Endothelial cell of umbilical vein (primary cell): ENCODE measurements at regions of chr3 and their contacts with region 1.

Region 1: DNA sequence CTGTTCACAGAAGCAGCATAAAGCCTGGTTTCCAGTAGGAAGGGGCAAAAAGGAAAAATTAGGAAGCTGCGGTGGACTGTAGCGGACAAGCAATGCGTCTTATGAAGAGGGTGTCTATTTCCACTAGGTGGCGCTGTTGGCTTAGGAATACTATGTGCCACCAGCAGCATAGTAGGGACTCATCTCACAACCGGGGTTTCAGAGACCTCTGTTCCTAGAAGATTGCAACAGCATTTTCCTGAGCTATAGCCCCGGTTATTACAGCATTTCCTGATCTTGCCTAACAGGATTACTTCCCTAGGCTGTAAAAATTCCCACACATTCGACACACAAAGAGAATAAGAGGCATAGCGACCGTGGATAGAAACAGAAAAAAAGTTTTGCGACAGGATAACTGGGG is 683.0 kb downstream of the TBL1XR1 start:
- DNase-seq: peak; percentile 73
- H3K4me3 ChIP-seq: no peak overlapping the region
- H3K27ac ChIP-seq: no peak overlapping the region
- H3K4me1 ChIP-seq: no peaks in the 10 kb centered on the region
- H3K27me3 ChIP-seq: no peaks in the 10 kb centered on the region
- CTCF ChIP-seq: peak; percentile 34 to 41
- POLR2A ChIP-seq: no peak

Region 2: DNA sequence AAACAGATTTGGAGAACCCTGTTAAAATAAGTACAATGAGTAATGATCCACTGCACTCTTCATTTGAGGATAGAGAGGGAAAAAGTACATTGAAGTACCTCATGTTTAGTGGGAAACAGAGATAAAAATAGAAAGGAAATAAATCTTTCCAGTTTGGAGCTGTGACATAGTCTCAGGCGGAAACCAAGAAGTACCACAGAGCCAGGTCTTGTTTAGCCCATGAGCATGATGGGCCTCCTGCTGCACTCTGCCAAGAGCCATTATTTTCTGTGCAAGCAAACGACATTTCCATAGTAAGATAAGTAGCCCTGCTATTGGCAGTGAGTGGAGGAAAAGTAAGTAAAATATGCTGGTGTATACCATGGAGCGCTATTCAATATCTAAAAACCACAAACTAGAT is 113.1 kb before region 1 on chr3:
- CTCF ChIA-PET with region 1: no interaction called
- POLR2A ChIA-PET with region 1: no interaction called
- dilution Hi-C with region 1: no loop called
- intact Hi-C with region 1: no loop called
- DNase-seq: no peak
- H3K4me3 ChIP-seq: no peak overlapping the region
- H3K27ac ChIP-seq: no peak overlapping the region
- H3K4me1 ChIP-seq: no peaks in the 10 kb centered on the region
- H3K27me3 ChIP-seq: no peaks in the 10 kb centered on the region
- CTCF ChIP-seq: no peak
- POLR2A ChIP-seq: no peak

Region 3: GRCh38 chr3:176814285-176814684 is 300.0 kb after region 1 on chr3:
- CTCF ChIA-PET with region 1: interaction called, 3 read pairs
- POLR2A ChIA-PET with region 1: no interaction called
- dilution Hi-C with region 1: no loop called
- intact Hi-C with region 1: loop called (anchors 1 kb)
- DNase-seq: peak; percentile 39
- H3K4me3 ChIP-seq: no peak overlapping the region
- H3K27ac ChIP-seq: no peak overlapping the region
- H3K4me1 ChIP-seq: no peaks in the 10 kb centered on the region
- H3K27me3 ChIP-seq: no peaks in the 10 kb centered on the region
- CTCF ChIP-seq: peak; percentile 15 to 51
- POLR2A ChIP-seq: no peak